ENCODE measurements at regions of chr16 and their contacts with region 1.

Region 1: GRCh38 chr16:28063641-28064061 is at the start of gene GSG1L:
- DNase-seq: no peak
- ATAC-seq: peak; percentile 49 to 78 (median 70)
- H3K4me3 ChIP-seq: peak within 1 kb of the TSS in 6 of 10 donors; percentile 19 to 51 (median 34)
- H3K27ac ChIP-seq: peak within 1 kb of the TSS in 1 of 10 donors; percentile 7
- H3K4me1 ChIP-seq: peaks cover 0 to 11% (median 0%) of the 10 kb centered on the region in 9 donors
- H3K27me3 ChIP-seq: peaks cover 10 to 65% (median 56%) of the 10 kb centered on the region in 7 donors
- CTCF ChIP-seq: peak in 8 of 9 donors; percentile 9 to 46 (median 32)
- total RNA-seq, gene GSG1L: 0.68 to 14.6 (median 3.4) TPM in 7 of 10 donors, not detected in the others

Region 2: GRCh38 chr16:27972500-27972899 is 91.2 kb before region 1 on chr16:
- intact Hi-C with region 1: loop called in 8 of 10 experiments (anchors 2 to 10 kb)
- DNase-seq: peak in 1 of 2 donors; percentile 16
- ATAC-seq: peak in 1 of 8 donors; percentile 44
- H3K4me3 ChIP-seq: no peak overlapping the region
- H3K27ac ChIP-seq: no peak overlapping the region
- H3K4me1 ChIP-seq: peaks cover 0 to 3% (median 0%) of the 10 kb centered on the region in 9 donors
- H3K27me3 ChIP-seq: peaks cover 0 to 13% (median 0%) of the 10 kb centered on the region in 7 donors
- CTCF ChIP-seq: peak in 8 of 9 donors; percentile 5 to 59 (median 54)

Region 3: GRCh38 chr16:27977966-27978365 is 85.7 kb before region 1 on chr16:
- intact Hi-C with region 1: loop called in 9 of 10 experiments (anchors 2 to 10 kb)
- DNase-seq: peak in 1 of 2 donors; percentile 57
- ATAC-seq: peak; percentile 50 to 91 (median 80)
- H3K4me3 ChIP-seq: no peak overlapping the region
- H3K27ac ChIP-seq: peak overlapping the region in 3 of 10 donors; percentile 26 to 59 (median 48)
- H3K4me1 ChIP-seq: peaks cover 0 to 12% (median 3%) of the 10 kb centered on the region in 9 donors
- H3K27me3 ChIP-seq: peaks cover 0 to 10% (median 0%) of the 10 kb centered on the region in 7 donors
- CTCF ChIP-seq: no peak

Region 4: DNA sequence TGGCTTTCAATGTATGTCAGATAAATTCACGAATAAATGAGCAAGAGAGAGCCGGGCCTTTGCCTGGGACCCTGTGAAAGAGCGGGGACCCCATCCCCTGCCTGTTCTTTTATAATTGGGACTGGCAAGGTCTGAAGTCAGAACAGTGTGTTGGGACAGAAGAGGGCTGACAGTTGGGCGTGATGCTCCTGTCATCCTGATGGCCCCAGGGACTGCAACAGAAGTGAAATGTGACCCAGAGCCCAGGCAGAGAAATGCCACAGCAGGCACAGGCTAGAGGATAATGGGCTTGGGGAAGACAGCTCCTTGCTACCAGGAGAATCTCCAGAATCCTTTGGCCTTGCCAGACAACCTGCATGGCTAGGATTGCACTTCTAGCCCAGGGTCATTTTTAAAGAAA is 38.0 kb before region 1 on chr16:
- intact Hi-C with region 1: no loop called
- DNase-seq: no peak
- ATAC-seq: no peak
- H3K4me3 ChIP-seq: no peak overlapping the region
- H3K27ac ChIP-seq: no peak overlapping the region
- H3K4me1 ChIP-seq: no peaks in the 10 kb centered on the region
- H3K27me3 ChIP-seq: no peaks in the 10 kb centered on the region
- CTCF ChIP-seq: no peak